Psoas muscle (tissue), 8 donors: ENCODE measurements at regions of chr3 and their contacts with region 1.

Region 1: DNA sequence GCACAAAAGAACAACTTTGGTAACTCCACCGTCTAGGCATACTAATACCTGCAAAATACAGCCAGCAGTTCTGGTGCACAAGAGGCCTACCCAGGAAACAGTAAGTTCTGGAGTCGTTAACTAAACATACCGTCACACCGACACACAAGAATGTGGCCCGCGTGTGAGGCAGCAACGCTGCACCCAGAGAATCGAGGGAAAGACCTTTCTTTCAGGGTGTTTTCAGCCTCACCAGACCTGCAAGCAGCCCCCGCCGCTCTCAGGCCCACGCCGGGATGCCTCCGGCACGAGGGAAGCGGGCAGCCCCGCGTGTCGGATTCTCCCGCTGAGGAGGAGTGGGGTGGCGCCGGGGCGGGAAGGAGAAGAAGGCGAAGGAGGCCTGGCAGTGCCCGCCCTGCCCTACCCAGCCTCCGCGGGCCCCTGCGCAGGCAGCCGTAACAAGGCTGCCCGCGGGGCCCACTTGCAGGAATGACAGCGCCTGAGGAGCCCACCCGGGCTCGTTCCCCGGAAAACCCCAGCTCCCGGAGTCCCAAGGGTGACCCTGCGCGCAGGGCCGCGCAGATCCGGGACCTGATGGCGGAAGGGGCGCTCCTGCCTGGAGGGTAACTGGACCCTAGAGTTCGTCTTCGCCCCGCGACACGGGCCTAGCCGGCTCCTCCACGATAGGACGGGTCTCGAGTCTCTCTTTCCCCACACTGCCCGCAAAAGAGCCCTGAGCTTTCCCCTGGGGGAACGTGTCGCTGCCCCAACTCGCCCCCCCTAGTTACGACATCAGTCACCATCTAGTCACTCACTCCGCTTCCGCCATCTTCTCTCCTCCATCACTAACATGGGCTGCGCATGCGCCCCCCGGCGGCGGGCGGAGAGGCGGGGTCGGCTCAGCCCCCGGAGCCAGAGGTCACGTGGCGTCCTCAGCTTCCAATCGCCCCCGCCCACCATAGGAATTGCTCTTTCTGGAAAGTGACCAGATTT is at the start of gene PHC3:
- DNase-seq: peak; percentile 94 to 96
- ATAC-seq: peak; percentile 96 to 97 (median 97)
- H3K4me3 ChIP-seq: peak within 1 kb of the TSS; percentile 92
- H3K27ac ChIP-seq: peak within 1 kb of the TSS; percentile 93
- H3K4me1 ChIP-seq: peaks cover 14% of the 10 kb centered on the region
- H3K27me3 ChIP-seq: no peaks in the 10 kb centered on the region
- CTCF ChIP-seq: peak; percentile 15
- total RNA-seq, gene PHC3: 35.2 to 41.7 (median 38.9) TPM

Region 2: DNA sequence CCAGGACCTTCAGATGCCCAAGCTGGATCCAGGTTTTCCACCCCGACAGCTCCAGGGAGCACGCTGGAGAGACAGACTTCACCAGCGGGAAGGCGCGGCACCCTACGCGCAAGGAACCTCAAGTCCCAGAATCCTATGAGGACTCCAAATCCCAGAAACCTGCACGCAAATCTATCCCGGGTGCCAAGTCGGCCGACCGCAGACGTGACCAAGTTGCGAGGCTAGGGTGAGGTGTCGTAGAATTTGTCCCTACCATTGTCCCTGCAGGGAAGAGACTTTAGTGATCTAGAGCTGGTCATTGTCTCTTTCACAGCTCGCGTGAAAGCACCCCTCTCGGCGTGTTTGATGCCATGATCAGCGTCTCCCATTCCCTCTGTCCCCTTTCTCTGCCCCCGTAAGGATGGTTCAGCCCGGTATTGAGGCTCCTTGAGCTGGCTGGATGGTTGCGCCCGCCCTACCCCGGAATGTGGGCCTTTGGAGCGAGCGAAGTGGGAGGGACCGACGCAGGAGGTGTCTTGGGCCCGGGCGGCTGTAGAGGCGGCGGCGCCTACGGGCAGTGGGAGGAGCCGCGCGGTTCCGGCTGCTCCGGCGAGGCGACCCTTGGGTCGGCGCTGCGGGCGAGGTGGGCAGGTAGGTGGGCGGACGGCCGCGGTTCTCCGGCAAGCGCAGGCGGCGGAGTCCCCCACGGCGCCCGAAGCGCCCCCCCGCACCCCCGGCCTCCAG is 40.9 kb after region 1 on chr3 and contains the start of gene PRKCI:
- intact Hi-C with region 1: loop called (anchors 2 to 5 kb)
- DNase-seq: peak; percentile 96 to 98
- ATAC-seq: peak; percentile 99 to 100 (median 99)
- H3K4me3 ChIP-seq: peak within 1 kb of the TSS; percentile 86
- H3K27ac ChIP-seq: peak within 1 kb of the TSS; percentile 87
- H3K4me1 ChIP-seq: peaks cover 4% of the 10 kb centered on the region
- H3K27me3 ChIP-seq: no peaks in the 10 kb centered on the region
- CTCF ChIP-seq: no peak
- total RNA-seq, gene PRKCI: 9.9 to 19.8 (median 14.8) TPM